Left colon (tissue), 2 donors: ENCODE measurements at regions of chr19 and their contacts with region 1.

Region 1: DNA sequence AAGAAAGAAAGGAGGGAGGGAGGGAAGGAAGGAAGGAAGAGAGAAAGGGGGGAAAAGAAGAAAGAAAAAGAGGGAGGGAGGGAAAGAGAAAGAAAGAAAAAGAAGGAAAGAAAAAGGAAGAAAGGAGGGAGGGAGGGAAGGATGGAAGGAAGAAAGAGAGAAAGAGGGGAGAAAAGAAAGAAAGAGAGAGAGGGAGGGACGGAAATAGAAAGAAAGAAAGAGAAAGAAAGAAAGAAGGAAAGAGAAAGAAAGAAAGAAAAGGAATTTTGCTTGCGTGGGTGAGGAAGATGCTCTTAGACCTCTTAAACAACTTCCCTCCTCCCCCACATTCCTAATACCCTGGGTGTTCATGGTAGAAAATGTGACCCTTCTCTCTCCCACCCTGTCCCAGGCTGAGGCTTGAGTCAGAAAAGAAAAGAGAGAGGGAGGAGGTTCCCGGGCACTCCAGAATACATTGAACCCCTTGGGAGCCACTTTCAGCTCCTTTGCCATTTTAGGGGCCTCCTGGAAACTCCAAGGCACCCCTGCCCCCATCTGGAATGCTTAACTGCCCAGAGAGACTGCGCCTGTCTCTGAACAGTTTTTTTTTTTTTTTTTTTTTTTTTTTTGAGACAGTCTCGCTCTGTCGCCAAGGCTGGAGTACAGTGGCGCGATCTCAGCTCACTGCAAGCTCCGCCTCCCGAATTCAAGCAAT is 9.2 kb upstream of the KANK3 start:
- DNase-seq: no peak
- ATAC-seq: no peak

Region 2: GRCh38 chr19:8505680-8506401 is 153.6 kb after region 1 on chr19:
- intact Hi-C with region 1: loop called in 1 of 2 experiments (anchors 5 kb)
- DNase-seq: peak in 1 of 2 donors; percentile 86
- ATAC-seq: peak; percentile 82